ENCODE measurements at regions of chrX and their contacts with region 1.

Region 1: DNA sequence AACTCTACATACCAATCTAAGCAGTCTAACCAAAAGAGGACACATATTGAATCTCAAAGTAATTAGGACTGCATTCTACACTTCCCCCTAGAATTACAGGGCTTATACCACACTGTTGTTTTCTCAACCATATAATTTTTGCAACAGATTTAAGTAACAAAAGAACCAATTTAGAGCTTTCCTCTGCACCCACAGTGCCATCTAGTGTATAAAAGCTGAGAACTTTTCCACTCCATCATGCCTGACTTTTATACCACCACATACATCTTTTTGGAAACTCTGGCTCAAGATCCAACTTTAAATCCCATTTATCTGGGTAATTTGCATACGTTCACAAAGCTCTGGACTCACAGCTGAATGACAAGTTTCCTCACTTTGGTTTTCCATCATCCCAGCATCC is 99.5 kb downstream of the EFHC2 start:
- DNase-seq: no peak
- H3K4me3 ChIP-seq: no peak overlapping the region
- H3K27ac ChIP-seq: no peak overlapping the region
- H3K4me1 ChIP-seq: no peaks in the 10 kb centered on the region
- H3K27me3 ChIP-seq: no peaks in the 10 kb centered on the region
- CTCF ChIP-seq: peak; percentile 51

Region 2: GRCh38 chrX:43958529-43958928 is 285.5 kb before region 1 on chrX:
- CTCF ChIA-PET with region 1: interaction called, 7 read pairs
- POLR2A ChIA-PET with region 1: no interaction called
- intact Hi-C with region 1: loop called (anchors 2 kb)
- DNase-seq: peak; percentile 14 to 51
- H3K4me3 ChIP-seq: no peak overlapping the region
- H3K27ac ChIP-seq: no peak overlapping the region
- H3K4me1 ChIP-seq: no peaks in the 10 kb centered on the region
- H3K27me3 ChIP-seq: no peaks in the 10 kb centered on the region
- CTCF ChIP-seq: peak; percentile 67

Measured in PC-9 (cell line).